MCF 10A (cell line): ENCODE measurements at regions of chr17 and their contacts with region 1.

Region 1: GRCh38 chr17:4074831-4075495 is 67.9 kb downstream of the ZZEF1 start:
- DNase-seq: peak; percentile 71
- H3K4me3 Mint-ChIP-seq: no peak overlapping the region
- H3K27ac Mint-ChIP-seq: no peak overlapping the region
- H3K4me1 Mint-ChIP-seq: no peaks in the 10 kb centered on the region
- H3K27me3 Mint-ChIP-seq: no peaks in the 10 kb centered on the region
- CTCF ChIP-seq: peak; percentile 58

Region 2: GRCh38 chr17:3859940-3860339 is 215.0 kb before region 1 on chr17:
- CTCF ChIA-PET with region 1: interaction called, 4 read pairs
- POLR2A ChIA-PET with region 1: interaction called, 3 read pairs
- intact Hi-C with region 1: loop called (anchors 5 kb)
- DNase-seq: no peak
- H3K4me3 Mint-ChIP-seq: no peak overlapping the region
- H3K27ac Mint-ChIP-seq: no peak overlapping the region
- H3K4me1 Mint-ChIP-seq: no peaks in the 10 kb centered on the region
- H3K27me3 Mint-ChIP-seq: no peaks in the 10 kb centered on the region
- CTCF ChIP-seq: no peak

Region 3: GRCh38 chr17:3935140-3935542 is 139.8 kb before region 1 on chr17:
- CTCF ChIA-PET with region 1: interaction called, 4 read pairs
- POLR2A ChIA-PET with region 1: no interaction called
- intact Hi-C with region 1: loop called (anchors 1 kb)
- DNase-seq: peak; percentile 78
- H3K4me3 Mint-ChIP-seq: no peak overlapping the region
- H3K27ac Mint-ChIP-seq: no peak overlapping the region
- H3K4me1 Mint-ChIP-seq: no peaks in the 10 kb centered on the region
- H3K27me3 Mint-ChIP-seq: no peaks in the 10 kb centered on the region
- CTCF ChIP-seq: peak; percentile 54

Region 4: GRCh38 chr17:4093456-4093855 is 18.5 kb after region 1 on chr17:
- CTCF ChIA-PET with region 1: interaction called, 10 read pairs
- POLR2A ChIA-PET with region 1: no interaction called
- intact Hi-C with region 1: no loop called
- DNase-seq: no peak
- H3K4me3 Mint-ChIP-seq: no peak overlapping the region
- H3K27ac Mint-ChIP-seq: no peak overlapping the region
- H3K4me1 Mint-ChIP-seq: no peaks in the 10 kb centered on the region
- H3K27me3 Mint-ChIP-seq: no peaks in the 10 kb centered on the region
- CTCF ChIP-seq: no peak

Region 5: GRCh38 chr17:4161179-4161559 is 86.2 kb after region 1 on chr17:
- CTCF ChIA-PET with region 1: no interaction called
- POLR2A ChIA-PET with region 1: no interaction called
- intact Hi-C with region 1: no loop called
- DNase-seq: peak; percentile 96
- H3K4me3 Mint-ChIP-seq: peak overlapping the region; percentile 59
- H3K27ac Mint-ChIP-seq: peak overlapping the region; percentile 98
- H3K4me1 Mint-ChIP-seq: peaks cover 54% of the 10 kb centered on the region
- H3K27me3 Mint-ChIP-seq: no peaks in the 10 kb centered on the region
- CTCF ChIP-seq: peak; percentile 13